ENCODE measurements at regions of chr3 and their contacts with region 1.

Region 1: GRCh38 chr3:88003115-88003755 is 55.6 kb downstream of the CGGBP1 start:
- DNase-seq: no peak
- ATAC-seq: no peak

Region 2: DNA sequence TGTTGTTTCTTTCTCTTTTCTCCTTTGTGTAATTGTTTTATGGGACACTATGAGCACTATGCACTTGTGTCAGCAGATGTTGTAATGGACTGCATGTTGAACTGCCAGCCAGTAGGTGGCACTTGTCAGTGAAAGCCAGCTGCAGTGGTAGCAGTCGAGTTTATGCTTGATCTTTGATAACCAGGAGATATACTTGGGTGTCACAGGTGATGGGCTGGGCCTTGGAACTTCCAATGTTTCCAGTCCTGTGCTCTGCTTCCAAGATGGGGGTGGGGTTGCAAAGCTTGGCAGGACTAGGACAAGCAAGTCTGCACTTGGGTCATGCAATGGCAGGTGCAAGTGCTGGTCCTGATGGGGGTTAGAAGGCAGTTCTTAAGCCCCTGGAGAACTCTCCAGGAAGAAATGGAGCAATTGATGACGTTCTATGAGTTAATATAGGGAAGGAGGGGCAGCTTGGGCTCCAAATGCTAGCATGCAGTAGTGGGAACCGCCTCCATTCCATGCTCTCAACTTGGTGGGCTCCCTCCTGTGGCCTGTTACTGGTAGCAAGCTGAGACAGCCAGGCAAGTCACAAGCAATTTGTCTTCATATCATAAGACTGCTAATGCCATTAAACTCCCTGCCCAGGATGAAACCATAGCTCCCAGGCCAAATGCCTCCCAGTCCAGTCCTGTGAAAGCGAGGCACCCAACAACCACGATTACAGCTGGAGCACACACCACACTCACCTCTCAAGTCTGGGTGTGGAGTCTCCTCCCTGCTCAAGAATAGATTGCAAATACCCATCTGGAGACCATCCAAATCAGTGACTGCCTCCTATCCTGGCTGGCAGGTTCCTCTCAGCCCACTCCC is 231.7 kb before region 1 on chr3:
- intact Hi-C with region 1: loop called in 1 of 2 experiments (anchors 10 kb)
- DNase-seq: peak; percentile 20
- ATAC-seq: no peak

Measured in left cardiac atrium (tissue), 4 donors.